Gastrocnemius medialis (tissue), 4 donors: ENCODE measurements at regions of chr12 and their contacts with region 1.

Region 1: GRCh38 chr12:70645494-70646317 is 8.5 kb upstream of the PTPRB start:
- DNase-seq: peak in 1 of 2 donors; percentile 22
- ATAC-seq: peak; percentile 81 to 90
- H3K4me3 ChIP-seq: no peak overlapping the region
- H3K27ac ChIP-seq: peak overlapping the region in 3 of 4 donors; percentile 35 to 51 (median 50)
- H3K4me1 ChIP-seq: peaks cover 4 to 13% of the 10 kb centered on the region in 2 donors
- H3K27me3 ChIP-seq: no peaks in the 10 kb centered on the region
- CTCF ChIP-seq: no peak
- POLR2A ChIP-seq: no peak

Region 2: DNA sequence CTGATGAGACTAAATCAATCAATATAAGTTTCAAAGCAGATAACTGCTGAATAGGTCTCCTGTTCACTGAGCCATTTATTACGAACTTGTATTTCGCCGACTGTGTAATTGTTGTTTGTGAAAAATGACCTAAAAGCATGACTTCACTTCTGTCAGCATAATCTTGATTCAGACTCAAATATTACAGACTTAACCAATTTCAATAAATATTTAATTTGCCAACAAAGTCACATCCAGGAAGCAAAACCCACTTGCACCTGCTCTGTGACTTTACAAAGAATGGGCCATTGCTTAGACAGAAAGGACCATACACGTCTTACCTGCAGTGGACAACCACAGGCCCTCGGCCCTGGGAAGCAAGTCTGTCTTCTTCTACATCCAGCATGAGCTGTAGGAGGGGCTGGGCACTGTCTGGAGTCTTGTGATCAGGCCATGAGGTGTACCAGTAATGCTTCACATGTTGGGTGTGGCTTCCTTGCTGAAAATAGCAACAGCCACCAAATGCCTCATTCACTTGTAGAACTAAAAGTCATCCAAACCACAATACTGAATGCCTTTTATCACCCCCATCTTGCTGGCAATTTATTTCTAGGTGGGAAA is 15.0 kb after region 1 on chr12:
- in situ Hi-C with region 1: no loop called
- intact Hi-C with region 1: loop called (anchors 2 kb)
- DNase-seq: peak in 1 of 2 donors; percentile 14
- ATAC-seq: peak; percentile 69 to 80
- H3K4me3 ChIP-seq: no peak overlapping the region
- H3K27ac ChIP-seq: peak overlapping the region in 3 of 4 donors; percentile 35 to 51 (median 37)
- H3K4me1 ChIP-seq: no peaks in the 10 kb centered on the region
- H3K27me3 ChIP-seq: no peaks in the 10 kb centered on the region
- CTCF ChIP-seq: no peak
- POLR2A ChIP-seq: peak in 1 of 2 donors; percentile 18